ENCODE measurements at regions of chr7 and their contacts with region 1.

Region 1: DNA sequence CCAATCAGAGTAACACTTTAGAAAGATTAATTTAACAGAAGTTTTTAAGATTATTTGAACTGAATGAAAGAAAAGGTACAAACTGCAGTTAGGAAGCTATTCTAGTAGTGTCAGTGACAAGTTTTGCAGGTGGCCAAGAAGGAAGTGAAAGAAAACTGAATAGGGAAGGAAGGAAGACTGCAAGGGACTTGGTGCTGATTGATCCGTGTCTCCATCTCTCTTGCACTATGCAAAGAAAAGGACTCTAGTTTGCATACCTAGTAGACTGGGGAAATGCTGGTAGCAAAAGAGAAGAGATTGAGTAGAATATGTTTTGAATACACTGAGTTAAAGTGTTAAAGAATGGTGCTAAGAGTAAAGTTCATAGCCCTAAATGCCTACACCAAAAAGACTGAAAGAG is 33.0 kb downstream of the OR6V1 start:
- DNase-seq: peak; percentile 88
- H3K4me3 ChIP-seq: peak overlapping the region; percentile 24
- H3K27ac ChIP-seq: peak overlapping the region; percentile 95
- H3K4me1 ChIP-seq: peaks cover 40% of the 10 kb centered on the region
- CTCF ChIP-seq: no peak

Region 2: GRCh38 chr7:142496545-142497041 is 588.5 kb before region 1 on chr7:
- CTCF ChIA-PET with region 1: no interaction called
- POLR2A ChIA-PET with region 1: no interaction called
- intact Hi-C with region 1: no loop called
- DNase-seq: peak; percentile 35
- H3K4me3 ChIP-seq: no peak overlapping the region
- H3K27ac ChIP-seq: no peak overlapping the region
- H3K4me1 ChIP-seq: no peaks in the 10 kb centered on the region
- CTCF ChIP-seq: peak; percentile 89

Region 3: DNA sequence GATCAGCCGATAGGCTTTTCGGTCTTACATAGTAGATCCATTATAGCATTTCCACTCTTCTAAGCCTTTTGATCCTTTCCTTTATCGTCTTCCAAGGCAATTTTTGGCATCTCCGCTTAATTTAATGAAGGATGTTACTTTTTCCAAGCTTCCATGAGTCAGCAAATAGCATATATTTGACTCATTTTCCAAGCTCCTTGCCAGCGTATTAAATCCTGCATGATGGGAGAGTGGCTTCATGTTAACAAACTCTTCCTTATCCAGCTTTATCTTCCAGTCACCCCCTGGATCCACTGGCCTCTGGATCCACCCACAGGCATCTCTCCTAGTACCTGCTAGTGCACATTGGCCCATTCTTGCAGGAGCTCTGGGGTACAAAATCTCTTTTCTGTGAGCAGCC is 71.2 kb before region 1 on chr7:
- CTCF ChIA-PET with region 1: no interaction called
- POLR2A ChIA-PET with region 1: interaction called, 24 read pairs
- intact Hi-C with region 1: loop called (anchors 2 kb)
- DNase-seq: no peak
- H3K4me3 ChIP-seq: peak overlapping the region; percentile 6
- H3K27ac ChIP-seq: peak overlapping the region; percentile 45
- H3K4me1 ChIP-seq: peaks cover 79% of the 10 kb centered on the region
- CTCF ChIP-seq: no peak

Region 4: GRCh38 chr7:143104832-143105241 is 19.7 kb after region 1 on chr7:
- CTCF ChIA-PET with region 1: no interaction called
- POLR2A ChIA-PET with region 1: no interaction called
- intact Hi-C with region 1: no loop called
- DNase-seq: no peak
- H3K4me3 ChIP-seq: no peak overlapping the region
- H3K27ac ChIP-seq: no peak overlapping the region
- H3K4me1 ChIP-seq: no peaks in the 10 kb centered on the region
- CTCF ChIP-seq: no peak

Region 5: DNA sequence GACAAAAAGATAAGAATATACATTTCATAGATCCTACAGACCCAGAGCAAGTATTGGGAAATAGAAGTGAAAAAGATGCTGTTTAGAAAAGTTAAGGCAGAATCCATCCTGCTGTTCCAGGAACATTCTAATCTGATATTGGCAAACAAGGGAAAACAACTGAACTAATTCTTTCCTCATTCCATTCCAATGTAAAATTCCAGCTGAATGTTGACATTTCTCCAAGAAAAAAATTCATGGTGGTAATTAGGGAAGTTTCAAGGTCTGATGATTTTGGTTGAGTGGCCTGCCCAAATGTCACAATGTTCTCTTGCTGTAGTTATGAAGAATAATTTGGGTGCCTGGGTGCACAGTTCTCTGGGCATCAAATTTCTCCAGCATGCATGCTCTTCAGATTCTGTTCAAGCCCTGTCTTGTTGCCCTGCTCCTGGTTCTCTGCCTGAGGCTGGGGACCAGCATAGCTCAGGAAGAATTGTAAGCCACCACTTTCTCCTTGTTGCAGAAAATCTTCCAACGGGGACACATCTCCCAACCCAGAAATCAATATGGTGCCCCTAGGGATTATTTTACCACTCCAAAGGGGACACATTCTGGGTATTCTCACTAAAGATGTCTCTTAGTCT is 62.1 kb after region 1 on chr7:
- CTCF ChIA-PET with region 1: no interaction called
- POLR2A ChIA-PET with region 1: no interaction called
- intact Hi-C with region 1: no loop called
- DNase-seq: no peak
- H3K4me3 ChIP-seq: no peak overlapping the region
- H3K27ac ChIP-seq: no peak overlapping the region
- H3K4me1 ChIP-seq: no peaks in the 10 kb centered on the region
- CTCF ChIP-seq: no peak

Measured in OCI-LY7 (cell line).